Activated naive CD4-positive, alpha-beta T cell treated with anti-CD3 and anti-CD28 coated beads for 36 hours (primary cell): ENCODE measurements at regions of chr4 and their contacts with region 1.

Region 1: DNA sequence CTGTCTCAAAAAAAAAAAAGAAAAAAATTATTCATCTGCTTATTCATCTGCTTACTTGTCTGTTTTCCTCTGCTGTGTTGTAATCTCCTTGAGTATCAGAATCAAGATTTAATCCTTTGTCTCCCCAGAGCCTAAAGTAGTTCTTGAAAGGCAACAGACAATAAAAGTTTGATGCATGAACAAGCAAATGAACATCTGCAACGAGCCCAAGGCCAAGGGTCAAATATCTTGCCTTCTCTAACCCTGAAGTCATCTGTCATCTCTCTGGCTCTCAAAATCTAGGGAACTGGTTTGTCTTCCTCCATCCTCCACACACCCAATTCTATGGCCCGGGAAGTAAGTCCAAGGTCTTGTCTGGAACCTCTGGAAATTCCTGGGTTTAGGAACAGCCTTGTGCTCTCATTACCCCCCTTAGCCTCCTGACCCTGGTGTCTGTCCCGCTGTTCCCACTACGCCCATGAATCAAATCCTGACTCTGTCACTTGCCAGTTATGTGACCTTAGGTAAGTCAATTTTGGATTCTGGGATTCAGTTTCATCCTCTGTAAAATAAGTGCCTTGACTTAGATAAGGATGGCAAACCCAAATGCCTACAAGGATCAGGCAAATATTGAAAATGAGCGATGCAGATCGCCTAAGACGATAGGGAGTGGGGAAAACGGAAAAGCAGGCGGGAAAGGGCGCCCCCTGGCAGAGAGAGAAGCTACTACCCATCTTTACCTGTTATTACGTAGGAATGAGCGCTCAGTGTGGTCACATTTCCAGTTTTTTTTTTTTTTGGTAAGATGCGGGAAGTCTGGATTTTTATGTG is 102.7 kb upstream of the DHX15 start:
- DNase-seq: peak; percentile 51
- H3K4me3 Mint-ChIP-seq: no peak overlapping the region
- H3K27ac Mint-ChIP-seq: no peak overlapping the region
- H3K4me1 Mint-ChIP-seq: no peaks in the 10 kb centered on the region
- H3K27me3 Mint-ChIP-seq: peaks cover 20% of the 10 kb centered on the region

Region 2: DNA sequence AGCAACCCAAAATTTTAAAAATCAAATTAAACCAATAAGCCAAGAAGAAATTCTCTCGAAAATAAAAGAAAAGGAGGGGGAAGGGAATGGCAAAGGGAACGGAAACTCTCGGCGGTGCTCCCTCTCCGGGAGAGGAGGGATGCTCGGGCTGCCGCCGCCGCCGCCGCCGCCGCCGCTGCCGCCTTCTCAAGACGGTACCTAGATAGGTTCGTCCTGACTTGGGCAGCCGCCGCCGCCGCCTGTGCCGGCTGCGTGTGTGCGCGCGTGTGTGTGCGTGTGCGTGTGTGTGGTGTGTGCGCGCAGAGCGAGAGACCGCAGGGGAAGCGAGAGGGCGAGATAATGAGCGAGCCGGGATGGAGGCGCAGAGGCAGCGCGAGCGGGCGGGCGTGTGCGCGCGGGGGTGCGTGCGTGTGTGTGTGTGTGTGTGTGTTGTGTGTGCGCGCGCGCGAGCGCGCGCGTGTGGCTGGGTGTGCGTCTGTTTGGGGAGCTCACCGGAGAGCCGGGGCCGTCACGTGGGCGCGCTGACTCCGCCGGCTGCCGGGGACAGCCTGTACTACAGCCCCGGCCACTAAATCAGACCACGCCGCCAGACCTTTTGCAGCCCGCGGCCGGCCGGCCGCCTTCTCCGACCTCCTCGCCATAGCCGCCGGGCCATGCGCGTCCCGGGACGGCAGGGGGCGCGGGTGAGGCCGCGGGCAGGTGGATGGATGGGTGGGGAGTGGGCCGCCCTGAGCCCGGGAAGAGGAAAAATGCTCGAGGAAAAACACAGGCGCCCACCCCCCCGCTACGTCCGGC is 214.4 kb before region 1 on chr4:
- CTCF ChIA-PET with region 1: no interaction called
- intact Hi-C with region 1: loop called (anchors 5 kb)
- DNase-seq: peak; percentile 47
- H3K4me3 Mint-ChIP-seq: peak overlapping the region; percentile 83
- H3K27ac Mint-ChIP-seq: no peak overlapping the region
- H3K4me1 Mint-ChIP-seq: peaks cover 29% of the 10 kb centered on the region
- H3K27me3 Mint-ChIP-seq: peaks cover 64% of the 10 kb centered on the region

Region 3: GRCh38 chr4:24507439-24507838 is 179.6 kb before region 1 on chr4:
- CTCF ChIA-PET with region 1: no interaction called
- intact Hi-C with region 1: no loop called
- DNase-seq: no peak
- H3K4me3 Mint-ChIP-seq: no peak overlapping the region
- H3K27ac Mint-ChIP-seq: no peak overlapping the region
- H3K4me1 Mint-ChIP-seq: no peaks in the 10 kb centered on the region
- H3K27me3 Mint-ChIP-seq: peaks cover 5% of the 10 kb centered on the region

Region 4: GRCh38 chr4:24657768-24658617 is 29.1 kb before region 1 on chr4:
- CTCF ChIA-PET with region 1: no interaction called
- intact Hi-C with region 1: no loop called
- DNase-seq: peak; percentile 35
- H3K4me3 Mint-ChIP-seq: no peak overlapping the region
- H3K27ac Mint-ChIP-seq: no peak overlapping the region
- H3K4me1 Mint-ChIP-seq: peaks cover 4% of the 10 kb centered on the region
- H3K27me3 Mint-ChIP-seq: peaks cover 10% of the 10 kb centered on the region